ENCODE measurements at regions of chr3 and their contacts with region 1.

Region 1: GRCh38 chr3:55485211-55485791 is 1.8 kb downstream of the WNT5A start:
- DNase-seq: no peak
- H3K4me3 ChIP-seq: peak overlapping the region; percentile 69 to 89 (median 80)
- H3K27ac ChIP-seq: peak overlapping the region; percentile 59 to 93 (median 90)
- H3K4me1 ChIP-seq: peaks cover 20 to 89% (median 27%) of the 10 kb centered on the region in 3 donors
- H3K27me3 ChIP-seq: peaks cover 0 to 90% (median 0%) of the 10 kb centered on the region in 4 donors
- CTCF ChIP-seq: peak; percentile 40 to 88 (median 46)
- POLR2A ChIP-seq: no peak

Region 2: GRCh38 chr3:55343486-55344357 is 141.6 kb before region 1 on chr3:
- intact Hi-C with region 1: no loop called
- DNase-seq: no peak
- H3K4me3 ChIP-seq: no peak overlapping the region
- H3K27ac ChIP-seq: peak overlapping the region in 1 of 4 donors; percentile 6
- H3K4me1 ChIP-seq: peaks cover 0 to 4% (median 0%) of the 10 kb centered on the region in 3 donors
- H3K27me3 ChIP-seq: peaks cover 0 to 7% (median 0%) of the 10 kb centered on the region in 4 donors
- CTCF ChIP-seq: no peak
- POLR2A ChIP-seq: no peak

Region 3: GRCh38 chr3:55406696-55407425 is 78.4 kb before region 1 on chr3:
- intact Hi-C with region 1: no loop called
- DNase-seq: no peak
- H3K4me3 ChIP-seq: no peak overlapping the region
- H3K27ac ChIP-seq: no peak overlapping the region
- H3K4me1 ChIP-seq: no peaks in the 10 kb centered on the region
- H3K27me3 ChIP-seq: no peaks in the 10 kb centered on the region
- CTCF ChIP-seq: no peak
- POLR2A ChIP-seq: no peak

Region 4: DNA sequence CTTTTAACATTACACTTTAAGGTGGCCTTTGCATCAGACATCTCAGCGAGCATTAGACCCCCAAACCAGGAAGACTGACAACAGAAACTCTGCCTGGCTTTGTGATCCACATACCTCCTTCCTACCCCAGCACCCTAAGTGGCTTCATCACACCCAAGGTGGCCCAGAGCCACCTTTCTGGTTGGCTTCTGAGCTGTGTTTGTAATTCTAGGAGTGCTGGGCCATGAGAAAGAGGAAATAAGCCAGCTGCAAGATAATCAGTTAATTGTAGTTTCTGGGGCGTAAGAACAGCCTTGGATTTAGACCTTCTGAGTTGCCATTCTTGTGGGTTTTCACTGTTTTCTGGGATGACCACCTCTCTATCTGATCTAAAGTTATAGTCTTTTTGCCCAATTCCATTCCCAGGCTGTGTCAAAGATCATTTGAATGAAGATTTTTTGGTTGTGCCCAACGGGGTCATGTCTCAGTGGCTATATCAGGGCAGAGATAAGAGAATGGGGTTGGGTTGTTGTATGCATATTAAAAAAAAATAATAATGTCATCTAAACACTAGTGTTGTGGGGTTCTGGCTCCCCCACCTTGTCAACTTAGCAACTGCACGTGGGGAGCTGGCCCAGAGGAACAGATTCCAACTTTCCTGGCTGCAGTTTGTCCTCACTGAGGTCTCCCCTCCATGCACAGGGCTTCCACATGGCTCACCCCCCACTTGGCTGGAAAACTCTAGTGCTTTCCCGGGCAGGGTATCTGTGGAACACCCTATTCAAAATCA is 236.6 kb after region 1 on chr3:
- intact Hi-C with region 1: loop called (anchors 5 kb)
- DNase-seq: no peak
- H3K4me3 ChIP-seq: no peak overlapping the region
- H3K27ac ChIP-seq: no peak overlapping the region
- H3K4me1 ChIP-seq: no peaks in the 10 kb centered on the region
- H3K27me3 ChIP-seq: no peaks in the 10 kb centered on the region
- CTCF ChIP-seq: peak in 5 of 6 experiments; percentile 37 to 72 (median 45)
- POLR2A ChIP-seq: no peak

Region 5: GRCh38 chr3:55899887-55900286 is 414.6 kb after region 1 on chr3:
- intact Hi-C with region 1: loop called (anchors 10 kb)
- DNase-seq: no peak
- H3K4me3 ChIP-seq: no peak overlapping the region
- H3K27ac ChIP-seq: no peak overlapping the region
- H3K4me1 ChIP-seq: no peaks in the 10 kb centered on the region
- H3K27me3 ChIP-seq: peaks cover 0 to 4% (median 0%) of the 10 kb centered on the region in 4 donors
- CTCF ChIP-seq: peak in 1 of 6 experiments; percentile 17
- POLR2A ChIP-seq: no peak